K562 (cell line): ENCODE measurements at regions of chr6 and their contacts with region 1.

Region 1: DNA sequence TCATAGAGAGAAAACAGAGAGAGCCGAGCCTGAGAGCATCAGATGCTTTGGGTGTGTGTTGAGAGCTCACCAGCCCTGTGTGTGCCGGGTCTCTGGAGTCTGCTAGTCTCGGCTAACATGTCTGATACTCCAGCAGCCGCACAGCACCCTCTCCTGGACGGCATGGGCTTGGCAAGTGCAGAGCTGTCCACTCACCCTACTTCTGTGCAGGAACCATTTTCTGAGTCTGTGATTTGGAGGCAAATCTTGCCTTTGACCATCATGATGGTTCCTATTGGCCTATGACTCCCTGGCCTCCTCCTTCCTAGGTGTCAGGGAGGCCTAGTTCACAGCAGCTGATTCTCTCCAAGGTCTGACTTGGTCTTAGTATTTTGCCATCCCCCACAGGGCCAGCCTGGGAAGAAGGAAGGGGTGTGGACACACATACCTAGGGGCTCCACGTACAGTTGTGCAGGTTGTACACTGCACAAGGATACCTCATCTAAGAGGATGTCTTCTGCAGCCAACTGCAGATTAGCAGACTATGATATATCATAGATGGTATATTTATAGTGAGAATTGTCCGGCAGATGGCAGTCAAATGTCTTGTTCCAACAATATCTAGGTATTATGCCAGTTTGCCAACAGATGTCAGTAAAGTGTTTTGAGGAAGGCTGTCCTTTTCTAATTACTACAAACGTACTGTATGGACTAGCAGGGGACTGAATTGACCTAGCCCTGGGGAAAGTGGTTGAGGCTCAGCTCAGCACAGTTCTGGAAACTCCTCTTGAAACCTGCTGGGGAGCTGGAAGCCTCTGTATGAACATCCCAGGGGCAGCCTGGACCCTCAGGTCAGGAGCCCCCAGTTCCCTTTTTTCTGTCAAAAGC is 13.0 kb downstream of the FGD2 start:
- DNase-seq: peak; percentile 88 to 93 (median 90)
- ATAC-seq: peak; percentile 97
- H3K4me3 ChIP-seq: no peak overlapping the region
- H3K27ac ChIP-seq: peak overlapping the region; percentile 25; the same call in 1 of the 3 replicates
- H3K4me1 ChIP-seq: peaks cover 13 to 26% of the 10 kb centered on the region in 2 experiments
- H3K27me3 ChIP-seq: no peaks in the 10 kb centered on the region; a peak in 1 of 5 replicates
- CTCF ChIP-seq: peak; percentile 99 to 100 (median 99)
- EP300 ChIP-seq: no peak
- POLR2A ChIP-seq: no peak
- RAD21 ChIP-seq: peak; percentile 92 to 98

Region 2: GRCh38 chr6:36615018-36615761 is 403.2 kb before region 1 on chr6:
- CTCF ChIA-PET with region 1: interaction called, 14 read pairs
- POLR2A ChIA-PET with region 1: no interaction called
- in situ Hi-C with region 1: no loop called
- intact Hi-C with region 1: no loop called
- DNase-seq: peak; percentile 65 to 75 (median 68)
- ATAC-seq: peak; percentile 76
- H3K4me3 ChIP-seq: no peak overlapping the region
- H3K27ac ChIP-seq: no peak overlapping the region
- H3K4me1 ChIP-seq: peaks cover 6 to 9% of the 10 kb centered on the region in 2 experiments; a peak in 3 of 5 replicates
- H3K27me3 ChIP-seq: no peaks in the 10 kb centered on the region; a peak in 1 of 5 replicates
- CTCF ChIP-seq: peak; percentile 81 to 97 (median 92)
- EP300 ChIP-seq: no peak; the same call in 1 of the 2 replicates
- POLR2A ChIP-seq: no peak
- RAD21 ChIP-seq: peak; percentile 82 to 92

Region 3: GRCh38 chr6:36885461-36886401 is 132.7 kb before region 1 on chr6 and contains the start of gene C6orf89:
- CTCF ChIA-PET with region 1: interaction called, 6 read pairs
- POLR2A ChIA-PET with region 1: interaction called, 4 read pairs
- in situ Hi-C with region 1: no loop called
- intact Hi-C with region 1: loop called (anchors 1 kb)
- DNase-seq: peak; percentile 93 to 100 (median 94)
- ATAC-seq: peak; percentile 93
- H3K4me3 ChIP-seq: peak within 1 kb of the TSS; percentile 64
- H3K27ac ChIP-seq: peak within 1 kb of the TSS; percentile 90
- H3K4me1 ChIP-seq: peaks cover 17 to 37% of the 10 kb centered on the region in 2 experiments; a peak in 4 of 5 replicates
- H3K27me3 ChIP-seq: no peaks in the 10 kb centered on the region
- CTCF ChIP-seq: peak; percentile 81 to 97 (median 95)
- EP300 ChIP-seq: no peak; the same call in 1 of the 2 replicates
- POLR2A ChIP-seq: peak; percentile 91
- RAD21 ChIP-seq: peak; percentile 66 to 69
- polyA plus RNA-seq, gene C6orf89: 35.2 to 41.9 TPM

Region 4: DNA sequence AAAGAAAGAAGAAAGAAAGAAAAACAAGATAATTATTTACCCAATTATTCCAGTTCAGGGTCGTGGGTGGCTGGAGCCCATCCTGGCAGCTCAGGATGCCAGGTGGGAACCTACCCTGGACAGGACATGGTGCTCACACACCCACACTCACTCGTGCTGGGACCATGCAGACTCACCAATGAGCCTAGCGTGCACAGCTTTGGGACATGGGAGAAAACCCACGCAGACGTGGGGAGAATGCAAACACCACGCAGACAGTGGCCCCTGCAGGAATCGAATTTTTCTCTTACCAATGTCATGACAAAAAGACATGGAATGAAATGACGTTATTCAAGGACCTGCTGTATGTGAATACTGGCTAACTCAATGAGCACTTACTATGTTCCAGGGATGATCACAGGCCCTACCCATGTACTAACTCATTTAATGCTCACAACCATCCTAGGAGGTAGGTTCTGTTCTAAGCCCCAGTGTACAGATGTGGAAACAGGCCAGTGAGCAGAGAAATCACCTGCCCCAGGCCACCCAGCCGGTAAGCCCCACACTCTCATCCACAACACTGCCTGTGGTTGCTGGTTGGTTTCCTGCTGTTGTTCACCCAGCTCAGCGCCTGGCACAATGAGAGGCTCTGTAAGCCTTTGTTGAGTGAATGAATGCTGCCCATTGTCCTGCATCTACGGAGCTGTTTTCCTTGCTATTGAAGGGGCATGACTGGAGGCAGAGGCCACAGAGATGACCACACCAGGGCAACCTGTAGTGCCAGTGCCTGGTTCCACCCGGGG is 70.7 kb before region 1 on chr6:
- CTCF ChIA-PET with region 1: no interaction called
- POLR2A ChIA-PET with region 1: no interaction called
- in situ Hi-C with region 1: no loop called
- intact Hi-C with region 1: no loop called
- DNase-seq: peak in 1 of 4 experiments; percentile 5
- ATAC-seq: peak; percentile 58
- H3K4me3 ChIP-seq: no peak overlapping the region
- H3K27ac ChIP-seq: no peak overlapping the region
- H3K4me1 ChIP-seq: no peaks in the 10 kb centered on the region
- H3K27me3 ChIP-seq: peaks cover 24 to 61% of the 10 kb centered on the region in 2 experiments
- CTCF ChIP-seq: no peak
- EP300 ChIP-seq: no peak
- POLR2A ChIP-seq: no peak
- RAD21 ChIP-seq: no peak

Region 5: DNA sequence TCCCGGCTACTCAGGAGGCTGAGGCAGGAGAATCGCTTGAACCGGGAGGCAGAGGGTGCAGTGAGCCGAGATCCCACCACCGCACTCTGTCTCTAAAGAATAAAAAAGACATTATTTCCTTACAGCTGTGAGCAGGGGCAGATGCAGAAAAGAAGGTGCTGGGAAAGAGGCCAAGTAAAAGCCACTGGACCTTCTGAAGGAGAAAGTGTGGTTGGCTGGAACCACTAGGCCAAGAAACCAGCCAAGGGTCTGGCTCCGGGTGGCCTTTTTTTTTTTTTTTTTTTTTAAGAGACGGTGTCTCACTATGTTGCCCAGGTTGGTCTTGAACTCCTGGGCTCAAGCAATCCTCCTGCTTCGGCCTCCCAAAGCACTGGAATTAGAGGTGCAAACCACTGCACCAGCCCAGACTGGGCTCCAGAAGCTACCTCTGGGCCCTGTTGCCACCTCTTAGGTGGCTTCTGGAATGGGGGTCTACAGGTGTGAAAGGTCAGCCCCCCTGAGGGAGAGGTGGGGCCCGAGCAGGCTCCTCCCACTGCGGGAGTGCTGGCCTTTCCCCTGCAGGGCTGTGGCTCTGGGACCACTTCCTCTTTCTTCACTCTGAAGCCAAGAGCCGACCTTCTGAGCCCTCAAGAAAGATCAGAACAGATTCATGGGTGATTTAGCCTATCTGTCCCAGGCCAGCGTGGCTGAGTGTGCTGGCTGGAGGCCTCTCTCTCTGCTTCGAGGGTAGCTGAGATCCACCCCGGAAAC is 13.2 kb before region 1 on chr6 and contains the start of gene FGD2:
- CTCF ChIA-PET with region 1: interaction called, 3 read pairs
- POLR2A ChIA-PET with region 1: interaction called, 14 read pairs
- in situ Hi-C with region 1: no loop called
- intact Hi-C with region 1: no loop called
- DNase-seq: peak; percentile 54 to 65 (median 62)
- ATAC-seq: peak; percentile 84
- H3K4me3 ChIP-seq: no peak within 1 kb of the TSS
- H3K27ac ChIP-seq: no peak within 1 kb of the TSS
- H3K4me1 ChIP-seq: peaks cover 2 to 12% of the 10 kb centered on the region in 2 experiments; a peak in 3 of 5 replicates
- H3K27me3 ChIP-seq: peaks cover 25 to 62% of the 10 kb centered on the region in 2 experiments
- CTCF ChIP-seq: no peak
- EP300 ChIP-seq: no peak
- POLR2A ChIP-seq: no peak
- RAD21 ChIP-seq: no peak
- polyA plus RNA-seq, gene FGD2: not detected

Region 6: DNA sequence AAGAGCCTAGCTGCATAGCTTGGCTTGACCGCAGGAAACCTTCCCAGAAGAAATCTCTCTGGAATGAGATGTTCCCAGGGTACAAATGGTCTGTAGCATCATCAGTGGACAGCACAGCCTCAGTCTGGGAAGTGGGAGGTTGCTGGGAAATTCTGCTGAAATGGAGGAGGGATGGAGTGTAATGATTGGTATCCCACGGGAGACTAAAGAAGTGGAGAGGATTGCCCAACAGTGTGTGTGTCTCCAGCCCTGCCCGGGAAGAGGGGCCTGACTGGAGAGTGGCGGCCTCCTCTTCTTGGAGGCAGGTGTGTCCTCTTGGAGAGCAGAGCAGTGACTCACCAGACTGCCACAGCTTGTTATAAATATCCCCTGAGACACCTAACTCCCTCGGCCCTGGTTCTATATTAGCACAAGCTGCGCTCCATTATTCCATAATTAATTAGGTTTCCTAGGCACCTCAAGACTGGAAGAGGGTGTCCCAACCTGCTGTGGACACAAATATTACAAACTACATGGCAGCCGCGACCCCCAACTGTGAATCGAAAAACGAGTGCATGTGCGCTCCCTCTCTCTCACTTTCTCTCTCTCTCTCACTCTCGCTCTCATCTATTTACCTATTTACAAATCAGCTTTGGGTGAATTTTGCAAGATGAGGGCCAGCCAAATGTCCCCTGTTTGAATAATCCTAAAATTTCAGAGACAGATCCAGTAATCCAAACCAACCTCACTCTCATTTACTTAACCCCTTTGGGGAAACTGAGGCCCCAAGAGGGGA is 55.8 kb after region 1 on chr6:
- CTCF ChIA-PET with region 1: no interaction called
- POLR2A ChIA-PET with region 1: no interaction called
- in situ Hi-C with region 1: no loop called
- intact Hi-C with region 1: no loop called
- DNase-seq: peak in 1 of 4 experiments; percentile 30
- ATAC-seq: peak; percentile 32; the same call in 2 of the 3 replicates
- H3K4me3 ChIP-seq: no peak overlapping the region
- H3K27ac ChIP-seq: no peak overlapping the region
- H3K4me1 ChIP-seq: peaks cover 5 to 16% of the 10 kb centered on the region in 2 experiments; a peak in 3 of 5 replicates
- H3K27me3 ChIP-seq: no peaks in the 10 kb centered on the region
- CTCF ChIP-seq: no peak
- EP300 ChIP-seq: no peak
- POLR2A ChIP-seq: no peak
- RAD21 ChIP-seq: no peak

Region 7: DNA sequence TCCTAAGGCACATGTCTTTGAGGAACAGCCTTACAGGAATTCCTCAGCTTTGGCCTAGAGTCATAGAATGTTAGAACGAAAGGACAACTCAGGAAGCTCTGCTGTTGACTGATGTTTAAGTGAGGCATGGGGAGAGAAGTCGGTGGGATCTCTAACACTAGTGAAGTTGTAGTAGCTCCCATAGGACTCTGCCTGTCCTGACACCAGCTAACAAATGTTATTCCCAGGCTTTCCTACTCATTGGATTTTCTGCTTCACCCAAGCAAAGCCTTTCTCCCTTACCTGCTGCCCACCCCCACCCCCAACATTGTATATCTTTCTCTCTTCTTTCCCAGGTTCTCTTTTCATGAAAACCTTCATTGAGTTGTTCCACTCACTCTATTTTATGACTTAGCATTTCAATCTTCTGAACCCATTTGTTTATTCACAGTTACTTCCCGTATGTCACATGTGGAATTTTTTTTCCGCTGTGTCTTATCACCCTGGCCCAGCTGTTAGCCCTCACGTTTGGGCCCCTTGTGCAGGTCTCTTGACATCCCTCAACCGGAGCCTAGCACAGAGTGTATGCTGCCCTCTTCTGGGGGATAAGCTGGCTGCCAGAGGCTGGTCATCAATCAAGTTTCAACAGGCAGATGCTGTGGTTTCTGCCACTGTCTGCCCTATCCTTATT is 296.2 kb after region 1 on chr6:
- CTCF ChIA-PET with region 1: interaction called, 36 read pairs
- POLR2A ChIA-PET with region 1: no interaction called
- in situ Hi-C with region 1: loop called (anchors 5 kb)
- intact Hi-C with region 1: loop called (anchors 1 kb)
- DNase-seq: peak; percentile 95 to 99 (median 98)
- ATAC-seq: peak; percentile 96
- H3K4me3 ChIP-seq: no peak overlapping the region
- H3K27ac ChIP-seq: peak overlapping the region; percentile 79
- H3K4me1 ChIP-seq: peaks cover 21 to 38% of the 10 kb centered on the region in 2 experiments
- H3K27me3 ChIP-seq: no peaks in the 10 kb centered on the region
- CTCF ChIP-seq: peak; percentile 95 to 99 (median 99)
- EP300 ChIP-seq: peak; percentile 99
- POLR2A ChIP-seq: no peak
- RAD21 ChIP-seq: peak; percentile 97

Region 8: GRCh38 chr6:37691904-37692806 is 673.7 kb after region 1 on chr6:
- CTCF ChIA-PET with region 1: interaction called, 15 read pairs
- POLR2A ChIA-PET with region 1: no interaction called
- in situ Hi-C with region 1: no loop called
- intact Hi-C with region 1: loop called (anchors 10 kb)
- DNase-seq: peak; percentile 85 to 91 (median 90)
- ATAC-seq: peak; percentile 96
- H3K4me3 ChIP-seq: no peak overlapping the region
- H3K27ac ChIP-seq: no peak overlapping the region
- H3K4me1 ChIP-seq: peaks cover 0 to 19% of the 10 kb centered on the region in 2 experiments; a peak in 3 of 5 replicates
- H3K27me3 ChIP-seq: peaks cover 45 to 89% of the 10 kb centered on the region in 2 experiments
- CTCF ChIP-seq: peak; percentile 96 to 99 (median 98)
- EP300 ChIP-seq: no peak
- POLR2A ChIP-seq: no peak
- RAD21 ChIP-seq: peak; percentile 98 to 99